GM13976 (cell line): ENCODE measurements at regions of chr3 and their contacts with region 1.

Region 1: GRCh38 chr3:66971891-66972551 is 26.1 kb upstream of the KBTBD8 start:
- DNase-seq: peak; percentile 84
- CTCF ChIP-seq: peak; percentile 75

Region 2: GRCh38 chr3:67416712-67417111 is 444.7 kb after region 1 on chr3:
- in situ Hi-C with region 1: no loop called
- DNase-seq: no peak
- CTCF ChIP-seq: no peak

Region 3: DNA sequence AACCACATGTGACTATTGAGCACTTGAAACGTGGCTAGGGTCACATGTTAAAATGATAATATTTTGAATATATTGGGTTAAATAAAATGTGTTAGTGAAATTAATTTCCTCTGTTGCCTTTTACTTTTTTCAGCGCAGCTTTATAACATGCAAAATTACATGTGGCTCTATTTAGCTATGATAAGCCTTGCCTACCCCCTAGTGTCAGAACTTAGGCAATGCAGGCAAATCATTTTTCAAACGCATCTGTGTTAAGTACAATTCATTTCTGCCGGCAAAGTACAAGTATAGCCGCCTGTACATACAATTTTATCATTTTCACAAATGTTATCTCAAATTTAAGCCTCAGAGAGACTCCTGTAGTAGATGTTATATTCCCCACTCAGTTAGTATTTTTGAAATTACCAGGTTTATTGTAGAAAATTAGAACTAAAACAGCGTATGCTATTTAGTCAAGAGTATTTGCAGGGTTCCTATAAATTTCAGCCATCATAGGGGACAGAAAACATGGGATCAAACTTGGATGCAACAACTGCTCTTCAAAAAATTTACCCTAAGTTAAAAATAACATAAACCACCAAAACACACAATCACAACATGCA is 1904.2 kb after region 1 on chr3:
- in situ Hi-C with region 1: loop called (anchors 25 kb)
- DNase-seq: peak; percentile 26
- CTCF ChIP-seq: peak; percentile 70